HCT116 (cell line): ENCODE measurements at regions of chr6 and their contacts with region 1.

Region 1: DNA sequence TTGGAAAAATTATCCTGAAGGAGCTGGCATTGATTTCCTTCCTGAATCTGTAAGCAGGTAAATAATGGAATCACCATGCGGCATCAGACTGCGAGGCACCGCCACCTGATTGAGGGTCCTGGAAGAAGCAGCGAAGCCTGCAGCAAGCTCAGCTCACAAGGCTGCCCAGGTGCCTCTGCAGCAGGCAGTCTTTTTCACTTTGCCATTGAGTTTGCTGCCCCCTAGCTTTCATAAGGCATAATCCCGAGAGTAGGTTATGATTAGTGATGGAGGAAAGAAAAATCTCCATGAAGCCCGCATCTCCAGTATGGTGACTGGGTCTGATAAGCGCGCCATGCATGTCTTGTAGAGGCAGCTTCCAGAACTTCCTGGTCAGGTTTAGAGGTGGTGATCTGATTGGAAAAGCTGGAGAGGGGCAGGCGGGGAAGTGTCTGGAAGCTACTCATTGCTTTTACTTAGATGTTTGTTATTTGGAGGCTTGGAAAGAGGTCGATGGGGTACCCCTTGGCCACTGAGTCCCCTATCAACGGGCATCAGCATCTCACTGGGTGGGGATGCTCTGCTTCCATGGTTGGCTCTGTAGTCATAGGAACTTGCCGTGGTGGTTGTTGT is 26.7 kb downstream of the IYD start:
- DNase-seq: peak; percentile 49
- ATAC-seq: peak; percentile 97
- H3K4me3 ChIP-seq: no peak overlapping the region
- H3K27ac ChIP-seq: no peak overlapping the region
- H3K4me1 ChIP-seq: peaks cover 0 to 3% of the 10 kb centered on the region in 2 experiments; a peak in 1 of 4 replicates
- H3K27me3 ChIP-seq: no peaks in the 10 kb centered on the region
- CTCF ChIP-seq: peak; percentile 69 to 89 (median 83)
- POLR2A ChIP-seq: no peak
- RAD21 ChIP-seq: peak; percentile 95

Region 2: GRCh38 chr6:149934249-149935156 is 461.0 kb before region 1 on chr6:
- CTCF ChIA-PET with region 1: no interaction called
- POLR2A ChIA-PET with region 1: no interaction called
- RAD21 ChIA-PET with region 1: no interaction called
- intact Hi-C with region 1: loop called (anchors 2 kb)
- DNase-seq: peak; percentile 76
- ATAC-seq: peak; percentile 67
- H3K4me3 ChIP-seq: no peak overlapping the region
- H3K27ac ChIP-seq: no peak overlapping the region
- H3K4me1 ChIP-seq: peaks cover 0 to 3% of the 10 kb centered on the region in 2 experiments; a peak in 1 of 4 replicates
- H3K27me3 ChIP-seq: no peaks in the 10 kb centered on the region
- CTCF ChIP-seq: peak; percentile 63 to 88 (median 87)
- POLR2A ChIP-seq: no peak
- RAD21 ChIP-seq: peak; percentile 96

Region 3: GRCh38 chr6:150380256-150380655 is 15.2 kb before region 1 on chr6:
- CTCF ChIA-PET with region 1: interaction called, 20 read pairs
- POLR2A ChIA-PET with region 1: no interaction called
- RAD21 ChIA-PET with region 1: no interaction called
- intact Hi-C with region 1: no loop called
- DNase-seq: no peak
- ATAC-seq: no peak
- H3K4me3 ChIP-seq: no peak overlapping the region
- H3K27ac ChIP-seq: no peak overlapping the region
- H3K4me1 ChIP-seq: peaks cover 0 to 7% of the 10 kb centered on the region in 2 experiments; a peak in 1 of 4 replicates
- H3K27me3 ChIP-seq: no peaks in the 10 kb centered on the region
- CTCF ChIP-seq: no peak
- POLR2A ChIP-seq: no peak
- RAD21 ChIP-seq: no peak